ENCODE measurements at regions of chr5 and their contacts with region 1.

Region 1: DNA sequence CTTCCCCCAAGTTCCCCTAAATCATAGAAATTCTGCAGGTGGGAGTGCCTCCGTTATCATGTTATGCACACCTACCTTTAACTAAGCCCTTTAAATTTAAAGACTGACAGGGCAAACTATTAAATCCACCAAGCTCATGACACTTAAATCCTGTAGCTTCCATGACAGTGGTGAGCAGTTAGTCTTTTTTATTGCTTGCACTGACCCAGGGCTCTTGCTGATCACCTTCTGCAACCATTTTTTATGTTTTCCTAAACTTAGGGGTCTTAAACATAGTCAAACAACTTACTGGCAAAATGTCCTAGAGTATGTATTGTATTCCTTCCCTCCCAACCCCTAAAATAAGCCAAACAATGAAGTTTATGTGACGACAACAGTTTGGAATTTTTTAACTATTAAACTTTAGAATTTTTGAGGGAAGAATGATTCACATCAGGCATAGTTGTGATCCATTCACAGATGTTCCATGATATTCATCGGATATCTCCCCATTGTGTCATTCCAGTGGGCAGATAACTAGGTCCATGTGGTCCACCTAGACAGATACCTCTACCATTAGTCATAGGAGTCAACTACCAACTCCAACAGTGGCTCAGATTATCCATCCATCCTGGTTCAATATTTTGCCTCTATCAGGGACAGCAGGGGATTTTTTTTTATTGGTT is 283.1 kb downstream of the ADAMTS6 start:
- DNase-seq: peak; percentile 99
- ATAC-seq: peak; percentile 85
- H3K4me3 ChIP-seq: no peak overlapping the region
- H3K27ac ChIP-seq: peak overlapping the region; percentile 81
- H3K4me1 ChIP-seq: peaks cover 11% of the 10 kb centered on the region
- H3K27me3 ChIP-seq: no peaks in the 10 kb centered on the region
- CTCF ChIP-seq: no peak
- POLR2A ChIP-seq: no peak
- RAD21 ChIP-seq: no peak

Region 2: DNA sequence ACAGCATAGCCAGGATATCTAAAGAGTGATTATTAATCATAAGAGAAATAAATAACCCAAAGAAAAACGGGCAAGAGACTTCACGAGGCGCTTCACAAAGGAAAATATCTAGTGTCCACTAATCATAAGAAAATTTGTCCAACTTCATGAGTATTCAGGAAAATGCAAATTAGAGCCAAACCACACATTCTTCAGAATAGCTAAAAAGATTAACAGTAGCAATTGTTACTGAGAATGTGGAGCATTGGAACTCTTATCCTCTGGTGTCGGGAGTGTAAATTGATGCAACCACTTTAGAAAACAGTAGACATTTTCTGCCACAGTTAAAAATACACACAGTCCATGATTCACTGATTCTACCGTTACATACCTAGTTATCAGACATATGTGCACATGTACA is 284.2 kb before region 1 on chr5:
- CTCF ChIA-PET with region 1: no interaction called
- POLR2A ChIA-PET with region 1: no interaction called
- dilution Hi-C with region 1: no loop called
- in situ Hi-C with region 1: no loop called
- intact Hi-C with region 1: no loop called
- DNase-seq: peak; percentile 59
- ATAC-seq: peak; percentile 11; the same call in 1 of the 2 replicates
- H3K4me3 ChIP-seq: no peak overlapping the region
- H3K27ac ChIP-seq: no peak overlapping the region
- H3K4me1 ChIP-seq: no peaks in the 10 kb centered on the region; the same call in 1 of the 2 replicates
- H3K27me3 ChIP-seq: no peaks in the 10 kb centered on the region
- CTCF ChIP-seq: no peak
- POLR2A ChIP-seq: no peak
- RAD21 ChIP-seq: no peak

Region 3: GRCh38 chr5:64958757-64959391 is 239.7 kb before region 1 on chr5:
- CTCF ChIA-PET with region 1: no interaction called
- POLR2A ChIA-PET with region 1: no interaction called
- dilution Hi-C with region 1: no loop called
- in situ Hi-C with region 1: no loop called
- intact Hi-C with region 1: loop called (anchors 5 kb)
- DNase-seq: peak; percentile 72
- ATAC-seq: no peak; the same call in 1 of the 2 replicates
- H3K4me3 ChIP-seq: no peak overlapping the region
- H3K27ac ChIP-seq: peak overlapping the region; percentile 56; the same call in 1 of the 2 replicates
- H3K4me1 ChIP-seq: peaks cover 3% of the 10 kb centered on the region; the same call in 1 of the 2 replicates
- H3K27me3 ChIP-seq: no peaks in the 10 kb centered on the region
- CTCF ChIP-seq: peak; percentile 68
- POLR2A ChIP-seq: no peak
- RAD21 ChIP-seq: peak; percentile 76

Region 4: DNA sequence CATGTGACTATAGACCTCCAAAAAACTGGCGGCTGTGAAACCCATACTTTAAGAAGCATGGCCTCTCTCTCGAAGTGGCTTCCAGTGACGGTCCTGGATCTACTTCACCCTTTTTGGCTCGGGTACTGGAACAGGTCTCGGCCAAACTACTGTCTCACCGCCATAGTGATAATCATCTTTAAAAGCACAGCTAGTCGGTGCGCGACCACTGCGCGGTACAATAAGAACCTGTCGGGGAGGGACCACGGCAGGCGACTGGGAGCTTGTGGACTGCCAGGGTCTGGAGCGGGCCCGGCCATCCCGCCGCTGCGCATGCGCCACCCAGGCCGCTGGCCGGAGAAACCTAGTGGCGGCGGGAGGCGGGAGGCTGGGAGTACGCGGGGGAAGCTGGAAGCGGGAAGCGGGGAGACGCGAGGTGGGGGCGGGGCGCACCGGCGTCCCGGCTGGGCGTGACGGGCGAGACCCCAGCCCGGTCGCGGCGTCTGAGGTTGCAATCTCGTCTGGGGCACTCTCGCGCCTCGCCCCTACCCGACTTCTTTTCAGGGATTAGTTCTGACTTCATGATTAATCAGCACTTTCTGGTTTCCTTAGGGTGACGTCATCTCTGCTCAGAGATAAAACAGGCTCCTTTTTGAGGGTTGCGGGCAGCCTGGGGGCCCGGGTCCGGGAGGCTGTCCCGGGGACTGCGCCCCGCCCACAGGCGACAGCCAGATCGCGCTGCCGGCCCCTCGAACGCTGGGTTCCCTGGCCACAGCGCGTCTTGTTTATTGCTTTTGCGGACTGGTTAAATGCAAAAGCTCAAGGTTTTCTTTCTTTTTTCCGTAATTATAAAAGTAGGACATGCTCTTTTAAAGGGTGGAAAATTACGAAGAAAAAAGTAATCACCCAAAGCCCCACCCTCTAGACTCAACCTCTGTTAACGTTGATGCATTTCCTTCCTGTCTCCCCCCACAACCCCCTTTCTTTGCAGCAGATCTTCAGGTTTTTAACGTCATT is 163.1 kb before region 1 on chr5:
- CTCF ChIA-PET with region 1: no interaction called
- POLR2A ChIA-PET with region 1: no interaction called
- dilution Hi-C with region 1: no loop called
- in situ Hi-C with region 1: no loop called
- intact Hi-C with region 1: loop called (anchors 5 kb)
- DNase-seq: peak; percentile 97
- ATAC-seq: peak; percentile 91
- H3K4me3 ChIP-seq: peak overlapping the region; percentile 64
- H3K27ac ChIP-seq: peak overlapping the region; percentile 96
- H3K4me1 ChIP-seq: peaks cover 8% of the 10 kb centered on the region
- H3K27me3 ChIP-seq: no peaks in the 10 kb centered on the region
- CTCF ChIP-seq: no peak
- POLR2A ChIP-seq: peak; percentile 88
- RAD21 ChIP-seq: no peak; the same call in 1 of the 2 replicates

Region 5: DNA sequence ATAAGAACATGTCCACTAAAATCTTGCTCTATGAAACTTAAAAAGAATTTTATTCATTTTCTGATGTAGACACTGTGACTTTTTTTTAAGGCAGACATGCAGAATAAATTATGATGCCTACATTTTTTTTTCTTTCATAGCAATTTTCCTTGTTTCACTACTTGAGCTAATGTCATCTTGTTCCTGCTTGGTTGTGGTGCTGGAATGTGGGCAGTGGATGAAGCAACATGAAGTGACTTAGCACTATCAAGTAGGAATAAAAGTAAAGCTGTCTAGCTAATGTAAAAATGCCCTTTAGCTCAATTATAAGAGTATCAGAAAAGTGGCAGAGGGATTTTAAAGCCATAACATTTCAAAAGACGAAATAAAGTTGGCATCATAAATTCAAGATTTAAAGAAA is 92.1 kb after region 1 on chr5:
- CTCF ChIA-PET with region 1: no interaction called
- POLR2A ChIA-PET with region 1: no interaction called
- dilution Hi-C with region 1: no loop called
- in situ Hi-C with region 1: no loop called
- intact Hi-C with region 1: no loop called
- DNase-seq: peak; percentile 44
- ATAC-seq: no peak
- H3K4me3 ChIP-seq: no peak overlapping the region
- H3K27ac ChIP-seq: no peak overlapping the region
- H3K4me1 ChIP-seq: no peaks in the 10 kb centered on the region
- H3K27me3 ChIP-seq: no peaks in the 10 kb centered on the region
- CTCF ChIP-seq: no peak
- POLR2A ChIP-seq: no peak
- RAD21 ChIP-seq: no peak

Measured in IMR-90 (cell line).